MCF 10A (cell line): ENCODE measurements at regions of chr11 and their contacts with region 1.

Region 1: DNA sequence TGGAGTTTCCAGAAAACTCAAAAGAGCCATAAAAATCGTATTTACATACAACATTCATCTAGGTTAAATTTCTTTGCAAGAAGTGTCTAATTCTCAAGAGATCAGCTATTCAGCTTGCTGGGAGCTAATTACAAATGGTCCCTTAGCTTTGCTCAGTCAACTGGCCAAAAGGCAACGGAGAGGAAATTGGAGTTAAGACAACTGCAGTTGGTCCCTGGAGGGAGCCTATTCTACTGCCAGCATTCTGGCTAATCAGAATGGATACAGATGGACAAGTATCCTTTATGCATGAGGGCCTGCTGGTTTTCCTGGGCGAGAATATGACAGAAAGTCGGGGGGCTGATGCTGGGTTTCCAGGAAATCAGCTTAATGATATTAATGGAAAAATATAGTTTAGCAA is 45.5 kb downstream of the KCNJ1 start:
- DNase-seq: no peak
- H3K4me3 Mint-ChIP-seq: no peak overlapping the region
- H3K27ac Mint-ChIP-seq: no peak overlapping the region
- H3K4me1 Mint-ChIP-seq: no peaks in the 10 kb centered on the region
- H3K27me3 Mint-ChIP-seq: no peaks in the 10 kb centered on the region
- CTCF ChIP-seq: no peak

Region 2: DNA sequence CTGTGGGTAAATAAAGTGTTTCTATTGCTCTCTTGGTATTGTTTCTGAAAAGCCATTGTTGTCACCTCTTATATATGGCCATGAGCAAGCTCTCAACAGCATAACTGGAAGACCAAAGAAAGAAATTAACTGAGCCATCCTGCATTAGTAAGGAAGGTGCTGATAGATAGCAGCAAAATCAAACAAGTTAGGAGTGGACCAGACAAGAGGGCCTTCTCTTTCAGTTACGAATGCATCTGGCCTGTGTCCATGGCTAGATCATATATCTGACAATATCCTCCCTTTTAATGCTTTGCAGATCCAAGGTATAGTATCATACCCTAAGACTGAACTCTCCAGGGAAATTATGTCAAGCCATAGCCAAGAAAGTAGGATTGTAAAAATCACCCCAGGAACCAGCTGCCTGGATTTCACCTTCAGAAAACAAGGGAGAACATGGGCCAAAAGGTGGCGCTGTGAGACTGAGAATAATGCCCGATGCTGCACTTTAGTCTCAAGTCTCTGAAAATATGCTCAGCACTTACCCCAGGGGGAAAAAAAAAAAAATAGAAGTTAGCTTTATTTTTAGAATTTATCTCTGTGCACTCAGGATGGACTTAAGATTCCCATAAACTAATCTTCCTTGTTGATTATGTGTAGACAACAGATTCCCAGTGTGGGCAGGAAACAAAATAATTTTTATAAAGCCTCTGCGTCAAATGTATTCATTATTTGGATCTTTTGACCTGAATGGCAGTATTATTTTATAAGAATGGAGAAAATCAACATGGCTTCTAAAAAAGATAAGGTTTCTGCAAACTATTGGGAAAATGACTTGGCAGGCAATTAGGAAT is 649.3 kb before region 1 on chr11:
- CTCF ChIA-PET with region 1: interaction called, 17 read pairs
- POLR2A ChIA-PET with region 1: no interaction called
- intact Hi-C with region 1: no loop called
- DNase-seq: peak; percentile 87
- H3K4me3 Mint-ChIP-seq: no peak overlapping the region
- H3K27ac Mint-ChIP-seq: peak overlapping the region; percentile 88
- H3K4me1 Mint-ChIP-seq: peaks cover 23% of the 10 kb centered on the region
- H3K27me3 Mint-ChIP-seq: no peaks in the 10 kb centered on the region
- CTCF ChIP-seq: peak; percentile 78

Region 3: GRCh38 chr11:128784059-128784804 is 37.3 kb before region 1 on chr11:
- CTCF ChIA-PET with region 1: no interaction called
- POLR2A ChIA-PET with region 1: no interaction called
- intact Hi-C with region 1: no loop called
- DNase-seq: no peak
- H3K4me3 Mint-ChIP-seq: no peak overlapping the region
- H3K27ac Mint-ChIP-seq: no peak overlapping the region
- H3K4me1 Mint-ChIP-seq: no peaks in the 10 kb centered on the region
- H3K27me3 Mint-ChIP-seq: no peaks in the 10 kb centered on the region
- CTCF ChIP-seq: no peak

Region 4: GRCh38 chr11:128841461-128842072 is 20.0 kb after region 1 on chr11:
- CTCF ChIA-PET with region 1: no interaction called
- POLR2A ChIA-PET with region 1: no interaction called
- intact Hi-C with region 1: no loop called
- DNase-seq: no peak
- H3K4me3 Mint-ChIP-seq: no peak overlapping the region
- H3K27ac Mint-ChIP-seq: no peak overlapping the region
- H3K4me1 Mint-ChIP-seq: no peaks in the 10 kb centered on the region
- H3K27me3 Mint-ChIP-seq: peaks cover 16% of the 10 kb centered on the region
- CTCF ChIP-seq: no peak

Region 5: DNA sequence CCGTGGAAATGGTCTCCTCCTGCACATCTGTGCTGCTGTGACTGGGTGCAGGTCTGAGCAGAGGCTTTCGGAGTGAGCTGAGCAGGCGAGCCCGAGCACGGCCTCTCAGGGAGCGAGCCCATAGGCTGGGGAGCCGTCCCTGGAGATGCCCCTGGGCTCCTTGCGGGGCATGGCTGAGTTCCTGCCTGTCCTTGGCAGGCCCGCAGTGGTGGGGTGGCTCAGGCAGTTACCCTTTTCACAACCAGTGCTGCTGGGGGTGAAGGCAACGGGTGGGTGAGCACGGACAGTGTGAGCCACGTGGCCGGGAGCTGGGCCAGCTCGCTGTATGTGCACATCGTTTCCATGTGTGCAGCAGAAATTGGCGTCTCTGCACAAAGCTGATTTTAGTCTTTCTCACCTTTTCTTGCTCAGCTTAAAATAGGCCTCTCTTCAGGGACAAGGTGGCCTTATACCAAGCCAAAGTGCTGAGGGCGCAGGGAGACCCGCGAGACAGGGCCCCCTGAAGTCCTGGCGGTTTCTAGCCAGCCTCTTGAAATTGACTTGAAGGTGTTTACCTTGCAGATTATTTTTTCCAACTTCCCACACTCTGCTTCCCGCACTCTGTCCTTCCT is 121.4 kb after region 1 on chr11 and contains the start of gene TP53AIP1:
- CTCF ChIA-PET with region 1: no interaction called
- POLR2A ChIA-PET with region 1: no interaction called
- intact Hi-C with region 1: no loop called
- DNase-seq: no peak
- H3K4me3 Mint-ChIP-seq: no peak within 1 kb of the TSS
- H3K27ac Mint-ChIP-seq: peak within 1 kb of the TSS; percentile 86
- H3K4me1 Mint-ChIP-seq: peaks cover 22% of the 10 kb centered on the region
- H3K27me3 Mint-ChIP-seq: no peaks in the 10 kb centered on the region
- CTCF ChIP-seq: no peak
- total RNA-seq, gene TP53AIP1: 4.5 and 5.8 TPM in 2 replicates